Tibial artery (tissue), 4 donors: ENCODE measurements at regions of chr15 and their contacts with region 1.

Region 1: GRCh38 chr15:55999636-56000035 is 6.2 kb upstream of the NEDD4 start:
- DNase-seq: no peak
- H3K4me3 ChIP-seq: no peak overlapping the region
- H3K27ac ChIP-seq: no peak overlapping the region
- H3K4me1 ChIP-seq: peaks cover 0 to 3% (median under 1%) of the 10 kb centered on the region in 4 donors
- H3K27me3 ChIP-seq: no peaks in the 10 kb centered on the region
- CTCF ChIP-seq: no peak

Region 2: DNA sequence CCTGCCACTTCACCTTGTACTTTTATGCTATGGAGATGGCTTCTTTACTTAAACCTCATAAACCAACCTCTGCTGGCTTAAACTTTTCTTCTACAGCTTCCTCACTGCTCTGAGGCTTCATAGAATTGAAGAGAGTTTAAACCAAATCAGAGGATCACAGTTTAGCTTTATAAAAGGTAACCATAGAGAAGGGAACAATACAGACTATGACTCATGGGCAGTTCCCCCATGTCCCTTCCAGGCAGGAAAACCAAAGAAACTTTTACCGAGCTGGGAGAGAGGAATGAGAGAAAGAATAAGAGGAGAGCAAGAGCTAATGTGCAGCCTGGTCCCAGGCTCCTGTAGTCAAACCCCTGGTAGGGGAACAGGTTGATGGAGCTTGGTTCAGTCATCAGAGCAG is 47.7 kb after region 1 on chr15:
- intact Hi-C with region 1: loop called (anchors 5 kb)
- DNase-seq: no peak
- H3K4me3 ChIP-seq: no peak overlapping the region
- H3K27ac ChIP-seq: no peak overlapping the region
- H3K4me1 ChIP-seq: peaks cover 0 to 1% (median 0%) of the 10 kb centered on the region in 4 donors
- H3K27me3 ChIP-seq: no peaks in the 10 kb centered on the region
- CTCF ChIP-seq: no peak